Prostate gland (tissue), 2 donors: ENCODE measurements at regions of chr13 and their contacts with region 1.

Region 1: GRCh38 chr13:71209217-71209616 is 657.8 kb downstream of the DACH1 start:
- DNase-seq: no peak
- H3K4me3 ChIP-seq: no peak overlapping the region
- H3K27ac ChIP-seq: no peak overlapping the region
- H3K4me1 ChIP-seq: no peaks in the 10 kb centered on the region
- H3K27me3 ChIP-seq: no peaks in the 10 kb centered on the region
- CTCF ChIP-seq: no peak
- POLR2A ChIP-seq: no peak

Region 2: DNA sequence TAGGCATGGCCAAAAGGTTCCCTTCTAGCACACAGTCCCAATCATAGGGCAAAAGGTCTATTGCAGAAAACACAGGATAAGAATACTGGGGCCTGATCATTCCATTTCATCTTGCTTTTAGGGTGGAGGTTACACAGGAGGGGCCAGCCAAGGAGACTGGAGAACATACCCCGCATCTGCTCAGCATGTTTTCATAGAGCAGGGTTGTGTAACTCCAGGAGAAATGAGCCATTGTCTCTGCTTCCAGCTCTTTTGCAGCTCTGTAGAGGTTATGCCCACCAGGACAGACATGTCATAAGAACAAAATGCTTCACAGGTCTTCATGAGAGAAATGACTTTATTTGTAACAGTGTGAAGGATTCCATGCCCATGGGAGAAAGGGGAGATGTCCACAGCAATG is 85.0 kb before region 1 on chr13:
- intact Hi-C with region 1: loop called (anchors 5 kb)
- DNase-seq: no peak
- H3K4me3 ChIP-seq: no peak overlapping the region
- H3K27ac ChIP-seq: no peak overlapping the region
- H3K4me1 ChIP-seq: no peaks in the 10 kb centered on the region
- H3K27me3 ChIP-seq: no peaks in the 10 kb centered on the region
- CTCF ChIP-seq: no peak
- POLR2A ChIP-seq: no peak